ENCODE measurements at regions of chr7 and their contacts with region 1.

Region 1: DNA sequence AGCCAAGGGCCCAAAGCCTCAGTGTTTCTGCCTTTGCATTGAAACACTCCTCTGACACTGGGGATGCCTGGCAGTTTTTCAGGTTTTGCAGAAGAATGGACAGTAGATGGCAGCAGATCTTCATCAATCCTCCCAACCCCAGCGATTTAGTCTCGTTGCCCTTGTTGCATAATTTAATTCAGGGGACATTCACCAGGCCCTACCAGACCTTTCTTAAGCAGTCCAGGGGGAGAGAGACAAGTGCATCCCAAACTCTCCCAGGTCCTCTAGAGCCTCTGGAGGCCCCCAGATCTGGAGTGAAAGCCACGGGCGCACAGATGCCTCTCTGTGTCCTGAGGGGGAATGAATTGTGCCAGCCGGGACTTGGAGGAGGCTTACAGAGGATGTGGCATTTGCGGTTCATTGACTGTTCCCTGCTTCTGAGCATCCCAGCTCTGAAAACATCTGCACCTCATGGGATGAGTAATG is 29.6 kb downstream of the MINDY4 start:
- DNase-seq: no peak

Region 2: DNA sequence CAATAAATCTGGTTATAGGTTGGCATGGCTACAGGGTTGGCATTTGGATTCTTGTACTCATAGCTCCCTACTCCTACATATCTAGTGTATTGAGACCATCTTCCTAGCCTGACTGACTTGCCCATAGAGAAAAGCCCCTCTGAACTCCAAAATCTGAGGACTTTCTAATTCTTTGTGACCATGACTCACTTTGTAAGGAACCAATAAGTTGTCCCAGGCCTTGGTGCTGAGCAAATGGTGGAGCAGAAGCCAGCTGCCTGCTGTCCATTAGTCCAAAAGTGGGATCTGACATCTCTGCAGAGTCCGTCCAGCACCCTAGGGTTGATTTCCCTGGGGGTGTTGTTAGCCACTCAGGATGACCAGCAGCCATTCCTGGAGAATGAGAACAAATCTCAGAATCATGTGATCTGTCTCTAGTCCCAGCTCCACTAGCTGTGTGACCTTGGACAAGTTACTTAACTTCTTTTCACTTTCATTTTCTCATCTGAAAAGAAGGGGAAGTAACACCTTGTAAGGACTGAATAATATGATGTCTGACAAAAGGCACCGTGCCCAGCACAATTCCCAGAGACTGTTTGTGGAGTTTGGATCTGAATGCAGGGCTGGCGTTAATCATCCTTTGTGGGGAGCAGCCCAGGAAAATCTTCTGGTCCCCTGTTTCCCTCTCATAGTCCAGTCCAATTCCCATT is 621.9 kb before region 1 on chr7:
- intact Hi-C with region 1: no loop called
- DNase-seq: no peak

Region 3: DNA sequence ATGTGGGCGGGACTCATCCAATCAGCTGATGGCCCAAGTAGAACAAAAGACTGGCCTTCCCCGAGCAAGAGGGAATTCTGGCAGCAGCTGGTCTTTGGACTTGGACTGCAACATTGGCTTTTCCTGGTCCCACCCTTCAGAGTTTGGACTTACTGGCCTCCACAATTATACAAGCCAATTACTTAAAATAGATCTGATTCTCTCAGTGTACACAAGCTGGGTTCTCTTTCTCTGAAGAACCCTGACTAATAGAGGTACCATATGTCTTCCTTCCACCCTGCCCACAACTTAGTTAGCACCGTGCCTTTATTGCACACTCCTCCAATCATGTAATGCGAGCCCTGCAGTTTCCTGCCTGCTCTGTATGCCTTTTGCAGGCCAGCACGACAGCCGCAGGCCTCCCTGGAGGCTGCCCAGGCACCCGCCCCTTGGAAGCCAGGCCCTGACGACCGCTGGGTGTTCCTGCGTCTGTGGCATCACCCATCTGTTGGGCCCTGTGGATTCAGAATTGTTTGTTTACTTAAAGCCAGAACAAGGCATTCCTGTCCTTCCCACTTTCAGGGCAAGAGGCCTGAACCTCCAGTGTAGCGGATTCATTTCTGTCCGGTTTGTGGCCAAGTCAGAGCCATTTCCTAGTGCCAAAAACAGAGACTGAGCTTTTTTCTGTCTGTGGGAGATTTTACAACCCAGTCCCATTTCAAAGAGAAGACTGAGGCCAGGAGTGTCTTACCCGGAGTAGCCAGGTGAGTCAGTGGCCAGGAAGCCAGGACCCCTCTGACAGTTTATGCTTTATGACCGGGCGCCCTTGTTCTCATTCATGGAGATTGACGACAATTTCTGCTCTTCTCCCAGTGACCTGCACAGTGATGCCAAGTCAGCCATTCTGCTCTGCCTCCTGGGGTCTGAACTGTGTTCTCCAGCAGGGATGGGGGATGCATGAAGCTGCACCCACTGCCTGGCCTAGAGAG is 49.9 kb before region 1 on chr7:
- intact Hi-C with region 1: loop called (anchors 5 kb)
- DNase-seq: peak; percentile 88

Region 4: GRCh38 chr7:30851651-30852307 is 51.0 kb after region 1 on chr7:
- intact Hi-C with region 1: no loop called
- DNase-seq: no peak

Region 5: GRCh38 chr7:30911561-30911969 is 110.7 kb after region 1 on chr7 and contains the start of gene AQP1:
- intact Hi-C with region 1: loop called (anchors 5 kb)
- DNase-seq: peak; percentile 92
- total RNA-seq, gene AQP1: 155 TPM

Region 6: GRCh38 chr7:30938435-30939316 is 137.9 kb after region 1 on chr7:
- intact Hi-C with region 1: loop called (anchors 1 kb)
- DNase-seq: peak; percentile 93

Region 7: GRCh38 chr7:30974605-30975255 is 173.9 kb after region 1 on chr7:
- intact Hi-C with region 1: loop called (anchors 2 kb)
- DNase-seq: peak; percentile 74

Region 8: DNA sequence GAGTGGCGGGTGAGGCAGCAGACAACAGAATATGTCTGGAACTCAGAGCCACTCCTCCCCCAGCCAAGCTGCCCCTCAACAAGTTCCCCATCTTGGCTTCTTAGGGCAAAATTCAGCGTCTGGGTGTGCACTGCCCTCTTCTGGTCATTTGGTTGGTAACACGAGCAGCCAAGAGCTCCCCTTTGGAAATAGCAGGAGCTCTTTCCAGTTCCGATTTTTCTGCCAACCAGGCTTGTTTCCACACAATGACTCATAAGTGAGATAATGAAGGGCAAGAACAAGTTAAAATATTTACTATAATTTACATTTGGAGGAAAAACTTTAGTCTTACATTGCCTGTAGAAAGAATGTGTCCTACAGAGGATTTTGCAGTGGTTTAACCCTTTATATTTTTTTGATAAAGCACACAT is 321.8 kb after region 1 on chr7:
- intact Hi-C with region 1: loop called (anchors 2 kb)
- DNase-seq: no peak